ENCODE measurements at regions of chr19 and their contacts with region 1.

Region 1: GRCh38 chr19:33514885-33515551 is 6.6 kb downstream of the PEPD start:
- DNase-seq: peak in 1 of 2 donors; percentile 39
- ATAC-seq: peak in 6 of 8 donors; percentile 8 to 70 (median 42)
- H3K4me3 ChIP-seq: no peak overlapping the region
- H3K27ac ChIP-seq: no peak overlapping the region
- H3K4me1 ChIP-seq: peaks cover 0 to 8% (median 0%) of the 10 kb centered on the region in 9 donors
- H3K27me3 ChIP-seq: no peaks in the 10 kb centered on the region
- CTCF ChIP-seq: no peak

Region 2: DNA sequence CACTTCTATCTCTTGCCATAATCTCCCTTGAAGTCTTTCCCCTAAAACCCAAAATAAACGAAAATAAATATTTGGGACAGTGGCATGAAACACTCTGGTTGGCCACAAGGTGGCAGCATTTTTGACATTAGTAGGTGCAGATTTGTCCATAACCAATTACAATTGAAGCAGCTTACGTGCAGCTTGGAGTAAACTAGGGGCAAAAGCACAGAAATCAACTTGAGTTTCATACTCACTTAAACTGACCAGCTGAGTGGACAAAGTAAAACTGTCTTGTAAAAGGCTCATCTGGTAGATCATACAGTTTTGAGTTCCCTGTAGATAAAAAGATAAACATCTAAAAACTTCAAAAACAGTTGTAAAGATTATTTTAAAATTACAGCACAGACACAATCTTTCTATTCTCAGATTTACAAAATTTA is 915.3 kb before region 1 on chr19:
- intact Hi-C with region 1: loop called in 1 of 10 experiments (anchors 10 kb)
- DNase-seq: peak in 1 of 2 donors; percentile 18
- ATAC-seq: peak in 2 of 8 donors; percentile 16 to 48
- H3K4me3 ChIP-seq: no peak overlapping the region
- H3K27ac ChIP-seq: no peak overlapping the region
- H3K4me1 ChIP-seq: no peaks in the 10 kb centered on the region
- H3K27me3 ChIP-seq: no peaks in the 10 kb centered on the region
- CTCF ChIP-seq: peak; percentile 71 to 85 (median 82)

Region 3: DNA sequence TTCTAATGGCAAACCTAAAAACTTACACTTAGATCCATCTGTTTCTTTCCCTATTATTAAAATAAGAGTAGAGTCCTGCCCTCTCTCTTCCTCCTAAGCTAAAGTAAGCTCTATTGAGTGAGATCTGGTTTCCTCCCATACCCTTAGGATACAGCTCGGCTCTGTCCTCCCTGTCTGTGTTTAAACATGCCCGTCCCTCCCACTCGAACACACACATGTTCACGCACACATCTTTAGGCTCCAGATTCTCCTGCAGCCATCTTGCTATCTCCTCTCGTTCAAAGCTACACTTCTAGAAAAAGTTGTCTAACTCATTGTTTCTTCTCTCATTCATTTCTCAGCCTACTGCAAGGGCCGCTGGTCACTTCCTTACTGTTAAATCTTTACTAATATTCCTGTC is 156.6 kb before region 1 on chr19:
- intact Hi-C with region 1: no loop called
- DNase-seq: no peak
- ATAC-seq: no peak
- H3K4me3 ChIP-seq: no peak overlapping the region
- H3K27ac ChIP-seq: no peak overlapping the region
- H3K4me1 ChIP-seq: no peaks in the 10 kb centered on the region
- H3K27me3 ChIP-seq: peaks cover 0 to 9% (median 0%) of the 10 kb centered on the region in 7 donors
- CTCF ChIP-seq: no peak

Region 4: GRCh38 chr19:33476213-33476612 is 38.8 kb before region 1 on chr19:
- intact Hi-C with region 1: no loop called
- DNase-seq: no peak
- ATAC-seq: no peak
- H3K4me3 ChIP-seq: no peak overlapping the region
- H3K27ac ChIP-seq: no peak overlapping the region
- H3K4me1 ChIP-seq: peaks cover 0 to 8% (median 0%) of the 10 kb centered on the region in 9 donors
- H3K27me3 ChIP-seq: no peaks in the 10 kb centered on the region
- CTCF ChIP-seq: no peak

Region 5: GRCh38 chr19:33678796-33679585 is 164.0 kb after region 1 on chr19:
- intact Hi-C with region 1: no loop called
- DNase-seq: no peak
- ATAC-seq: no peak
- H3K4me3 ChIP-seq: no peak overlapping the region
- H3K27ac ChIP-seq: no peak overlapping the region
- H3K4me1 ChIP-seq: no peaks in the 10 kb centered on the region
- H3K27me3 ChIP-seq: peaks cover 0 to 53% (median 33%) of the 10 kb centered on the region in 7 donors
- CTCF ChIP-seq: no peak